Naive thymus-derived CD4-positive, alpha-beta T cell (primary cell): ENCODE measurements at regions of chr19 and their contacts with region 1.

Region 1: GRCh38 chr19:47130591-47131227 is at the start of gene SAE1:
- DNase-seq: peak; percentile 84 to 97 (median 91)
- ATAC-seq: peak; percentile 94
- H3K4me3 ChIP-seq: peak within 1 kb of the TSS; percentile 98
- H3K4me3 Mint-ChIP-seq: peak within 1 kb of the TSS; percentile 92 to 100 (median 99)
- H3K27ac ChIP-seq: peak within 1 kb of the TSS; percentile 85
- H3K27ac Mint-ChIP-seq: peak within 1 kb of the TSS; percentile 87 to 97 (median 92)
- H3K4me1 ChIP-seq: peaks cover 11 to 25% of the 10 kb centered on the region in 2 donors
- H3K4me1 Mint-ChIP-seq: peaks cover 44 to 57% (median 52%) of the 10 kb centered on the region in 7 donors
- H3K27me3 ChIP-seq: no peaks in the 10 kb centered on the region
- H3K27me3 Mint-ChIP-seq: peaks cover 0 to 7% (median 0%) of the 10 kb centered on the region in 5 donors
- total RNA-seq, gene SAE1: 34.3 to 115 (median 46.4) TPM

Region 2: GRCh38 chr19:47143322-47144073 is 12.8 kb after region 1 on chr19:
- CTCF ChIA-PET with region 1: interaction called, 21 read pairs
- POLR2A ChIA-PET with region 1: interaction called, 22 read pairs
- intact Hi-C with region 1: loop called (anchors 1 to 2 kb)
- DNase-seq: no peak
- ATAC-seq: no peak
- H3K4me3 ChIP-seq: no peak overlapping the region
- H3K4me3 Mint-ChIP-seq: peak overlapping the region in 3 of 10 donors; percentile 9 to 45 (median 32)
- H3K27ac ChIP-seq: no peak overlapping the region
- H3K27ac Mint-ChIP-seq: peak overlapping the region in 4 of 9 donors; percentile 11 to 73 (median 42)
- H3K4me1 ChIP-seq: peaks cover 21 to 38% of the 10 kb centered on the region in 2 donors
- H3K4me1 Mint-ChIP-seq: peaks cover 29 to 75% (median 57%) of the 10 kb centered on the region in 7 donors
- H3K27me3 ChIP-seq: no peaks in the 10 kb centered on the region
- H3K27me3 Mint-ChIP-seq: no peaks in the 10 kb centered on the region

Region 3: DNA sequence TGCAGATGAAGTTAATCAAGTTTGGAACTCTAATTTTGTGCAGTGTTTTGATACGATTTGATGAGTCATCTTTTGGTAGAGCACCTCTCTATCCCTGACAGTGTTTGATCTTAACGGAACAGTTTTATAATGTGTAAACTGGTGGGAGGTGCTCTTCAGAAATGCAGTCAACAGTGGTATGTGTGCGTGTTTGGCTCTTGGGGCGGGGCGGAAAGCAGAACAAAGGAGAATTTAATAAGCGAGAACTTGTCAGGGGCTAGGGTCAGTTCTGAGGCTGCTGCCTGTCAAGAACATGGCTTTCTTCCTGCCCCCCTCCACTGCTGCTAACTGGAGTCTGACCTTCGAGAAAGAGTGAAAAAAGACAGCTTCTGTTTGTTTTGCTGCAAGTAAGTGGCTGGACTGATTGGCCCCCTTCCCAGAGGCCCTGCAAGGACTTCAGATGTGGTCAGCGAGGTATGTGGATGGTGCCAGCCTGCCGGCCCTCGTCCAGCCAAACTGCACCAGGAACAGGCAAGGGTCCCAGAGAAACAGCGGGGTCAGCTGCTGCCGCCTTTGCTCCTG is 59.5 kb after region 1 on chr19:
- CTCF ChIA-PET with region 1: interaction called, 5 read pairs
- POLR2A ChIA-PET with region 1: interaction called, 12 read pairs
- intact Hi-C with region 1: no loop called
- DNase-seq: peak in 8 of 9 donors; percentile 52 to 77 (median 64)
- ATAC-seq: peak; percentile 53
- H3K4me3 ChIP-seq: no peak overlapping the region
- H3K4me3 Mint-ChIP-seq: peak overlapping the region; percentile 48 to 83 (median 72)
- H3K27ac ChIP-seq: peak overlapping the region; percentile 25
- H3K27ac Mint-ChIP-seq: peak overlapping the region; percentile 72 to 98 (median 95)
- H3K4me1 ChIP-seq: peaks cover 37 to 77% of the 10 kb centered on the region in 2 donors
- H3K4me1 Mint-ChIP-seq: peaks cover 41 to 81% (median 71%) of the 10 kb centered on the region in 7 donors
- H3K27me3 ChIP-seq: no peaks in the 10 kb centered on the region
- H3K27me3 Mint-ChIP-seq: no peaks in the 10 kb centered on the region